Transverse colon (tissue), 4 donors: ENCODE measurements at regions of chr18 and their contacts with region 1.

Region 1: GRCh38 chr18:52747869-52748268 is 407.9 kb downstream of the DCC start:
- DNase-seq: no peak
- H3K4me3 ChIP-seq: no peak overlapping the region
- H3K27ac ChIP-seq: no peak overlapping the region
- H3K4me1 ChIP-seq: no peaks in the 10 kb centered on the region
- H3K27me3 ChIP-seq: no peaks in the 10 kb centered on the region
- CTCF ChIP-seq: no peak
- EP300 ChIP-seq: no peak
- POLR2A ChIP-seq: no peak

Region 2: GRCh38 chr18:52468496-52468895 is 279.4 kb before region 1 on chr18:
- in situ Hi-C with region 1: no loop called
- intact Hi-C with region 1: loop called (anchors 2 kb)
- DNase-seq: no peak
- H3K4me3 ChIP-seq: no peak overlapping the region
- H3K27ac ChIP-seq: no peak overlapping the region
- H3K4me1 ChIP-seq: no peaks in the 10 kb centered on the region
- H3K27me3 ChIP-seq: no peaks in the 10 kb centered on the region
- CTCF ChIP-seq: no peak
- EP300 ChIP-seq: no peak
- POLR2A ChIP-seq: no peak

Region 3: GRCh38 chr18:52888014-52888413 is 140.1 kb after region 1 on chr18:
- in situ Hi-C with region 1: no loop called
- intact Hi-C with region 1: loop called (anchors 5 kb)
- DNase-seq: no peak
- H3K4me3 ChIP-seq: no peak overlapping the region
- H3K27ac ChIP-seq: no peak overlapping the region
- H3K4me1 ChIP-seq: no peaks in the 10 kb centered on the region
- H3K27me3 ChIP-seq: no peaks in the 10 kb centered on the region
- CTCF ChIP-seq: no peak
- EP300 ChIP-seq: no peak
- POLR2A ChIP-seq: no peak